Psoas muscle (tissue), 8 donors: ENCODE measurements at regions of chr12 and their contacts with region 1.

Region 1: DNA sequence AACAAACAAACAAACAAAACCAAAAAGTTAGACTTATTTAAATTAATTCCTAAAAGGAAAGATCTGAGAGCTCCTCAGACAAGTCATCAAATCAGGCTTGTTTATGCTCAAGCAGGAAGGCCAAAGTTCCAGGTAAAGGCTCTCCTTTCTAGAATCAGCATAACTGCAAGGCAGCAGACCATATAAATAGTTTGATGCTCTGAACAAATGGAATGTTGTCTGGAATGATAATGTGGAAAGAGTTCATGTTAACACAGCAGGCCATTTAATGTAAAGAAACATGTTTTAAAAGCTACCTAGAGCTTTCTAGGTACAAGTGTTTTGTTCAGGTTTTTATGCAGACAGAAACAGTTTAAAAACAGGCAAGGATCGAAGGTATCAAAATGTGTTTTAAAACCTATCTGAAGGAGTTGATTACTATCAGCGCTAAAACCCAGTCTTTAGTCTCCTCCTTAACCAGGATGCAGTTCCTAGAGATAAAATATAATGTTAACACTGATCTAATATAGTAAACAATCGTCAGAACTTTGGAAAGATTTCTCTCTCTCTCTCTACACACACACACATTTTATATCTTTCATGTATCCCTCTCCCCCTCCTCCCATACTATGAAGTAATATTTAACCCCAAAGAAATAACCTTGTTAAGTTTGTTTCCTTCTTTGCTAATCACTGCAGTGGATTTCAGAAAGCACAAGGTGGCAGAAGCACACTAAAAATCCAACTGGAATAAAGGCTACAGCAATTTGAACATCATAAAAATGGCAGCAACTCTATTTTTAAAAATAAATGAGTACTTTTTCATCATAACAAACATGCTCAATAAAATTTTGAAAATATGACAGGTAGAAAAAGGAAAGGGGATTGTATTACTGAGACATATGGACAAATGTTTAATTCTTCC is 135.5 kb downstream of the PAWR start:
- DNase-seq: no peak
- ATAC-seq: no peak
- H3K4me3 ChIP-seq: no peak overlapping the region
- H3K27ac ChIP-seq: no peak overlapping the region
- H3K4me1 ChIP-seq: peaks cover 3% of the 10 kb centered on the region
- H3K27me3 ChIP-seq: no peaks in the 10 kb centered on the region
- CTCF ChIP-seq: peak; percentile 52

Region 2: DNA sequence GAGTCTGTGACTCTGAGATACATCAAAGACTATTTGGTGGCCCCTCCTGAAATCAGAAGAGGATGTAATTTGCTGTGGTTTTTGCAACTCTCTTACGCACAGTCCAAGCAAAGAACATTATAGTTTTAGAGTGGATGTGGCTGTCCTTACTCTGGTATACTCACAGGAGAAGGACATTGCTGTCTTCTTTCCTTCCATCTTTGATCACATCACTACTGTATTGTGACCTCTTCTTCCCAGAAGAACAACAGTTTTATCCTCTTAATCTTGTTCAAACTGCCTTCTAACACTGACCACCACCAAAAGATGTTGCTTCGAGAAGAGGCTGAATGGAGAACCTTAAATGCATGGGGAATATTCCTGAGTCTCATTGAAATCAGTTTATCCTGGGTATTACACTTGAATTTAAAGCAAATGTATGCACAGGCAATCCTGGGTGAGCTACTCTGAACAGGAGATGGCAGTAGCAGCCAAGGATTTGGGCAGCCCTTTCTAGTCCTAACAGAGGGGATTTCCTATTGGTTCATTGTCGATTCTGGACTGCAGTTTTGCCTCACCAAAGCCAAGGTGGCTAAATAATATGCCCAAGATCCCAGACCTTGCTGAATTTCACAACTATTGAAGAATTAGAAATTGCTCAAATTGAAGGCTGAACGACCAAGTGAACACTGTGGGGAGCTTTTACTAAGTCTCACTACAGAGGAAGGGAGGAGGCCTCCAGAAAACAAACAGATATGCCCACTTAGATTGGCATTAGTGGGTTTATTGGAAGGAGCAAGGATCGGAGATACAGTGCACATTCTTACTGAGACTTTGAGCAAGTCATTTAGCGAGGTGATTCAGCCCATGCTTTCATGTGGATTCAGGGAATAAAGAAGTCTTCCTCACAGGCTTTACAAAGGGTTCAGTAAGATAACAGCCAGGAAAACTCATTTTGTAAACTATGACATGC is 147.3 kb before region 1 on chr12:
- intact Hi-C with region 1: no loop called
- DNase-seq: peak in 1 of 2 donors; percentile 12
- ATAC-seq: no peak
- H3K4me3 ChIP-seq: no peak overlapping the region
- H3K27ac ChIP-seq: no peak overlapping the region
- H3K4me1 ChIP-seq: no peaks in the 10 kb centered on the region
- H3K27me3 ChIP-seq: no peaks in the 10 kb centered on the region
- CTCF ChIP-seq: peak; percentile 28

Region 3: GRCh38 chr12:79690638-79691493 is 135.6 kb after region 1 on chr12 and contains the start of gene PAWR:
- intact Hi-C with region 1: loop called in 1 of 2 experiments (anchors 5 kb)
- DNase-seq: peak; percentile 21 to 57
- ATAC-seq: peak in 3 of 4 donors; percentile 30 to 48 (median 34)
- H3K4me3 ChIP-seq: peak within 1 kb of the TSS; percentile 73
- H3K27ac ChIP-seq: peak within 1 kb of the TSS; percentile 41
- H3K4me1 ChIP-seq: no peaks in the 10 kb centered on the region
- H3K27me3 ChIP-seq: peaks cover 0 to 52% (median 15%) of the 10 kb centered on the region in 3 donors
- CTCF ChIP-seq: no peak
- total RNA-seq, gene PAWR: 1.9 to 3.5 (median 2.7) TPM

Region 4: GRCh38 chr12:79737875-79738718 is 182.8 kb after region 1 on chr12:
- intact Hi-C with region 1: loop called (anchors 5 to 10 kb)
- DNase-seq: no peak
- ATAC-seq: no peak
- H3K4me3 ChIP-seq: no peak overlapping the region
- H3K27ac ChIP-seq: no peak overlapping the region
- H3K4me1 ChIP-seq: no peaks in the 10 kb centered on the region
- H3K27me3 ChIP-seq: no peaks in the 10 kb centered on the region
- CTCF ChIP-seq: peak; percentile 46

Region 5: GRCh38 chr12:80269803-80270552 is 714.7 kb after region 1 on chr12:
- intact Hi-C with region 1: loop called (anchors 5 to 10 kb)
- DNase-seq: no peak
- ATAC-seq: peak in 3 of 4 donors; percentile 64 to 81 (median 66)
- H3K4me3 ChIP-seq: no peak overlapping the region
- H3K27ac ChIP-seq: no peak overlapping the region
- H3K4me1 ChIP-seq: no peaks in the 10 kb centered on the region
- H3K27me3 ChIP-seq: no peaks in the 10 kb centered on the region
- CTCF ChIP-seq: peak; percentile 69